Psoas muscle (tissue), 8 donors: ENCODE measurements at regions of chr7 and their contacts with region 1.

Region 1: GRCh38 chr7:140924019-140924820 is 509 bp downstream of the BRAF start:
- DNase-seq: peak; percentile 76 to 90
- ATAC-seq: peak; percentile 84 to 88 (median 86)
- H3K4me3 ChIP-seq: peak overlapping the region; percentile 84
- H3K27ac ChIP-seq: peak overlapping the region; percentile 98
- H3K4me1 ChIP-seq: peaks cover 31% of the 10 kb centered on the region
- H3K27me3 ChIP-seq: no peaks in the 10 kb centered on the region
- CTCF ChIP-seq: no peak

Region 2: DNA sequence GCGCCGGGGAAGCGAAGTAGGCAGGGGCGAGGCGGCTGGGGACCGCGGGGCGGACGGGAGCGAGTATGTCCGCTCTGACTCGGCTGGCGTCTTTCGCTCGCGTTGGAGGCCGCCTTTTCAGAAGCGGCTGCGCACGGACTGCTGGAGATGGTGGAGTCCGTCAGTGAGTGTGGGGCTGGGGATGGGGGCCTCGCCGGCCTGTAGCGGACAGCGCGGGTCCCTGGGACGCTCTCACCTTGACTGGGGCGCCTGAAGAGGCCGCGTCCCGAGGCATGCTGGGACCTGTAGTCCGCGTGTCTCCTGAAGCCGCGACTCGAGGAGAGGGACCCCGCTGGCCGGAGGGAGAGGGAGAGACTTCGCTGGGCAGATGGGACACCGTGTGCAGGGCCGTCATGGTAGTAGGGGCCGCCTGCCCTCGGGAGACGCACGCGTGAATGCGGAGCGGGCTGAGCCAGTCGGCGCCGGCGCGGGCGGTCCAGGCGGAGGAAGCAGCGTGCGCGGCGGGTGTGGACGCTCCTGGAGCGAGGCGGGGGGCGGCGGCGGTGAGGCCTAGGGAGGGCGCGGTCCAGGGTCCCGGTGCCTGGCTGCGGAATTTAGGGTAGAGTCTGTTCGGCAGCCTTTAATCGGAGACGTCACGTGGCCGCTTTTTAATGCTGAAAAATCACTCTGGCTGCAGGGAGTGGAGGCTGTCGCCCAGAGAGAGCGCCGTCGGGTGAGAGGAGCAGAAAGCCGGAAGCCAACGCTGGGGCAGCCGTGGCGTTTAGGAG is 227.4 kb before region 1 on chr7 and contains the start of gene NDUFB2:
- intact Hi-C with region 1: loop called in 1 of 2 experiments (anchors 10 kb)
- DNase-seq: peak; percentile 77 to 82
- ATAC-seq: peak; percentile 90 to 93 (median 92)
- H3K4me3 ChIP-seq: peak within 1 kb of the TSS; percentile 88
- H3K27ac ChIP-seq: peak within 1 kb of the TSS; percentile 97
- H3K4me1 ChIP-seq: peaks cover 21% of the 10 kb centered on the region
- H3K27me3 ChIP-seq: no peaks in the 10 kb centered on the region
- CTCF ChIP-seq: no peak
- total RNA-seq, gene NDUFB2: 320 to 481 (median 388) TPM

Region 3: GRCh38 chr7:141014524-141015395 is 90.5 kb after region 1 on chr7 and contains the start of gene MRPS33:
- intact Hi-C with region 1: no loop called
- DNase-seq: peak; percentile 93 to 96
- ATAC-seq: peak; percentile 99 to 100 (median 100)
- H3K4me3 ChIP-seq: peak within 1 kb of the TSS; percentile 85
- H3K27ac ChIP-seq: peak within 1 kb of the TSS; percentile 87
- H3K4me1 ChIP-seq: peaks cover 11% of the 10 kb centered on the region
- H3K27me3 ChIP-seq: peaks cover 0 to 7% (median 0%) of the 10 kb centered on the region in 3 donors
- CTCF ChIP-seq: peak; percentile 15
- total RNA-seq, gene MRPS33: 70.5 to 105 (median 93.7) TPM

Region 4: GRCh38 chr7:141158613-141159012 is 234.4 kb after region 1 on chr7:
- intact Hi-C with region 1: no loop called
- DNase-seq: peak; percentile 67 to 81
- ATAC-seq: peak; percentile 80 to 85 (median 82)
- H3K4me3 ChIP-seq: no peak overlapping the region
- H3K27ac ChIP-seq: no peak overlapping the region
- H3K4me1 ChIP-seq: no peaks in the 10 kb centered on the region
- H3K27me3 ChIP-seq: no peaks in the 10 kb centered on the region
- CTCF ChIP-seq: no peak